Activated CD4-positive, alpha-beta T cell treated with anti-CD3 and anti-CD28 coated beads, Interleukin-2, amount 10 ng/mL, durations not matched to agents 24 days and 14 days (primary cell): ENCODE measurements at regions of chr20 and their contacts with region 1.

Region 1: GRCh38 chr20:25390538-25391528 is at the start of gene ABHD12:
- DNase-seq: peak; percentile 98
- H3K4me3 Mint-ChIP-seq: peak within 1 kb of the TSS; percentile 90
- H3K27ac Mint-ChIP-seq: peak within 1 kb of the TSS; percentile 94
- H3K4me1 Mint-ChIP-seq: peaks cover 16% of the 10 kb centered on the region
- H3K27me3 Mint-ChIP-seq: no peaks in the 10 kb centered on the region
- total RNA-seq, gene ABHD12: 28.7 and 30.0 TPM in 2 replicates

Region 2: DNA sequence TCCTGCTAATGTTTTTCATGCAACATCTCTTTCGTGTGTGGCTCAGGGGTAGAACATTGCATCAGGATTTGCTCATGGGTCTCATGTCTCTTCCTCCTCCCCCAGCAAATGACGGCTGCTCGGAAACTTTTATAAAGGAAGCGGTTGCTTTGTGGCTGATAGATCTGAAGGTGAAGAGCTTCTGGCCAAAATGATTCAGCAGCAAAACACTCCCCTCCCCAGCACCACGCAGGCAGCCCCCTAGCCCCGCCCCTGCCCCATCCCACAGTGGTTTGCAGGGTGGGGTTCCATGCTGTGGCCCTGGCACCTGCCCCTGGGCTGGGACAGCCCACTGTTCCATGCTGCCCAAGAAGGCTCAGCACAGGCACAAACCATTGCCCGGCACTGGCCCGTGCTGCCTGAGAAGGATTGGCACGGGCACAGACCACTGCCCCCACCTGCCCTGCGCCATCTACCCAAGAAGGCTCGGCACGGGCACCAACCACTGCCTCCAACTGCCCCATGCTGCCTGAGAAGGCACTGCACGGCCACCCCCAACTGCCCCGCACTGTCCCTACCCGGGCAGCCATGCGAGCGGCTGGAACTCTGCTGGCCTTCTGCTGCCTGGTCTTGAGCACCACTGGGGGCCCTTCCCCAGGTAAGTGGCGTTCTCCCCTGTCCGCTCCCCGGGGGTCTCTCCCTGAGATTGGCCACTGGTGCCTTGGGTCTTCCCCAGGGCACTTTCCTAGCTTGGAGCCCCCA is 441.7 kb before region 1 on chr20 and contains the start of gene CST7:
- intact Hi-C with region 1: loop called (anchors 5 kb)
- DNase-seq: peak; percentile 95
- H3K4me3 Mint-ChIP-seq: peak within 1 kb of the TSS; percentile 95
- H3K27ac Mint-ChIP-seq: peak within 1 kb of the TSS; percentile 98
- H3K4me1 Mint-ChIP-seq: peaks cover 67% of the 10 kb centered on the region
- H3K27me3 Mint-ChIP-seq: no peaks in the 10 kb centered on the region
- total RNA-seq, gene CST7: 115 and 117 TPM in 2 replicates

Region 3: DNA sequence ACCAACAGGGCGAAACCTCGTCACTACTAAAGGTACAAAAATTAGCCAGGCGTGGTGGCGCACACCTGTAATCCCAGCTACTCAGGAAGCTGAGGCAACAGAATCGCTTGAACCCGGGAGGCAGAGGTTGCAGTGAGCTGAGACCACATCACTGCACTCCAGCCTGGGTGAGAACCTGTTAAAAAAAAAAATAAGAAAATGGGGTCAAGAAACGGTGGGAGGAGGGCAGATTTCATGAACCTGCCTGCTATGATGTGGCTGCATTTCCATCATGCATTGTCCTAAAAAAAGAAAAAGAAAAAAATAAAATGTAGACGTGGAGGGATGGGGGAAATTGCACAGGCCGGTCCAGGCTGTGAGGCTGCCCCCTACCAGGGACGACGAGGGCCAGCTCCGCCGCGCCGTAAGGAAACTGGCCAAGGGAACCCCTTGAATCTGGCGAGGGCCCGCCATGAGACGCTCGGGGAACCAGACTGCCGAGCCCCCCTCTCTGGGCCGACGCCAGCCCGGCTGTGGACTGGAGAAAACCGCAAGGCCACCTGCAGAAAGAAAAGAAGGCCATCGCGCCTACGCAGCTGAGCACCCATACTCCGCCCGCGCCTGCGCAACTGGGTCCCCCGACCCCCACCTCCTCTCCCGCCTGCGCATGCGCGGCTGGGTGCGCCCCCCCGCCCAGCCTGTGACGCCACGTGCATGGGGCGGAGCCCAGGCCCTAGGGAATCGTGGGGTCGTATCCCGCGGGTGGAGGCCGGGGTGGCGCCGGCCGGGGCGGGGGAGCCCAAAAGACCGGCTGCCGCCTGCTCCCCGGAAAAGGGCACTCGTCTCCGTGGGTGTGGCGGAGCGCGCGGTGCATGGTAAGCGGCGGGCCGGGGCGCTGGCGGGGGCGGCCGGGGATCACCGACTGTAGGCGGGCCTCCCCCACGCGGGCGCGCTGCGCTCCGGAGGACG is 195.5 kb before region 1 on chr20 and contains the start of gene ENTPD6:
- intact Hi-C with region 1: loop called (anchors 1 kb)
- DNase-seq: peak; percentile 98
- H3K4me3 Mint-ChIP-seq: peak within 1 kb of the TSS; percentile 94
- H3K27ac Mint-ChIP-seq: peak within 1 kb of the TSS; percentile 79
- H3K4me1 Mint-ChIP-seq: peaks cover 27% of the 10 kb centered on the region
- H3K27me3 Mint-ChIP-seq: peaks cover 6% of the 10 kb centered on the region
- total RNA-seq, gene ENTPD6: 42.1 and 44.2 TPM in 2 replicates

Region 4: GRCh38 chr20:25310268-25310920 is 80.4 kb before region 1 on chr20:
- intact Hi-C with region 1: loop called (anchors 1 kb)
- DNase-seq: peak; percentile 88
- H3K4me3 Mint-ChIP-seq: peak overlapping the region; percentile 85
- H3K27ac Mint-ChIP-seq: peak overlapping the region; percentile 98
- H3K4me1 Mint-ChIP-seq: peaks cover 31% of the 10 kb centered on the region
- H3K27me3 Mint-ChIP-seq: no peaks in the 10 kb centered on the region

Region 5: GRCh38 chr20:25407311-25408169 is 16.7 kb after region 1 on chr20 and contains the start of gene GINS1:
- intact Hi-C with region 1: loop called (anchors 1 kb)
- DNase-seq: peak; percentile 96
- H3K4me3 Mint-ChIP-seq: peak within 1 kb of the TSS; percentile 90
- H3K27ac Mint-ChIP-seq: peak within 1 kb of the TSS; percentile 95
- H3K4me1 Mint-ChIP-seq: peaks cover 19% of the 10 kb centered on the region
- H3K27me3 Mint-ChIP-seq: no peaks in the 10 kb centered on the region
- total RNA-seq, gene GINS1: 43.0 and 43.2 TPM in 2 replicates

Region 6: DNA sequence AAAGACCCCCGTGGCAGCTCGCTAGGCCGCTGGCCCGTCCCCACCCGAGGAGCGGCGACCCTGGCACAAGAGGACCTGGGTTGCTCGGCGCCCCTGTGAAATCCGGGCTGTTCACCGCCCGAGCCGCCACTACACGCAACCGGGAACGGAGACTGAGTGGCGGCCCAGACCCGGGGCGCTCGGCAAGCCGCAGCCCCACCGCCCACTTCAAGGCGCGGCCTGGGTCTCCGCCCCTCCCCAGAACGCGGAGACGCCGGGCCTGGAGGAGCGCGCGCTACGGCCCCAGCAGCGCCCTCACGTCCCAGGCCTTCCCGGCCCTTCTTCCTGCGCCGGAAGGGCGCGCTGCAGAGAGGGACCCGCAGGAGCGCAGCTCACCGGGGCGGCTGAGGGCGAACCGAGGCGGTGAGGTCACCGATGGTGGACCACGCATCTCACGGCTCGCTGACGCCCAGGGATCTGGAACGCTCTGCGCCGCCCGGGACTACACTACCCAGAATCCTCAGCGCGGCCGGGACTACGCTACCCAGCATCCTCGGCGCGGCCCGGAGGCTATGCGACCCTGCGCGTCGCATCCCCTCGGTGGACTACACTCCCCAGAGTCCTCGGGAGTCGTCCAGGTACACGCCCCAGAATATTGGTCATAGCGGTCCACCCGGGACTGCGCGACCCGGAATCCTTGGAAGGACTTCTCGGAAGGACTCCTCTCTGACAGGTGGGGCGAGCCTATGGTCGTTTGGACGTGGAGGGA is 305.7 kb after region 1 on chr20 and contains the start of gene ZNF337:
- intact Hi-C with region 1: loop called (anchors 5 kb)
- DNase-seq: peak; percentile 98
- H3K4me3 Mint-ChIP-seq: peak within 1 kb of the TSS; percentile 95
- H3K27ac Mint-ChIP-seq: peak within 1 kb of the TSS; percentile 94
- H3K4me1 Mint-ChIP-seq: peaks cover 22% of the 10 kb centered on the region
- H3K27me3 Mint-ChIP-seq: peaks cover 4% of the 10 kb centered on the region
- total RNA-seq, gene ZNF337: 15.7 and 16.1 TPM in 2 replicates

Region 7: GRCh38 chr20:25706793-25707192 is 316.0 kb after region 1 on chr20:
- intact Hi-C with region 1: no loop called
- DNase-seq: peak; percentile 80
- H3K4me3 Mint-ChIP-seq: peak overlapping the region; percentile 33
- H3K27ac Mint-ChIP-seq: peak overlapping the region; percentile 39
- H3K4me1 Mint-ChIP-seq: peaks cover 25% of the 10 kb centered on the region
- H3K27me3 Mint-ChIP-seq: peaks cover 11% of the 10 kb centered on the region